Left lung (tissue), 14 donors: ENCODE measurements at regions of chr7 and their contacts with region 1.

Region 1: GRCh38 chr7:82729172-82730030 is 285.8 kb upstream of the CACNA2D1 start:
- DNase-seq: peak in 1 of 4 donors; percentile 52
- ATAC-seq: peak; percentile 58
- H3K4me3 ChIP-seq: no peak overlapping the region
- H3K27ac ChIP-seq: no peak overlapping the region
- H3K4me1 ChIP-seq: no peaks in the 10 kb centered on the region
- H3K27me3 ChIP-seq: no peaks in the 10 kb centered on the region
- CTCF ChIP-seq: peak; percentile 46

Region 2: DNA sequence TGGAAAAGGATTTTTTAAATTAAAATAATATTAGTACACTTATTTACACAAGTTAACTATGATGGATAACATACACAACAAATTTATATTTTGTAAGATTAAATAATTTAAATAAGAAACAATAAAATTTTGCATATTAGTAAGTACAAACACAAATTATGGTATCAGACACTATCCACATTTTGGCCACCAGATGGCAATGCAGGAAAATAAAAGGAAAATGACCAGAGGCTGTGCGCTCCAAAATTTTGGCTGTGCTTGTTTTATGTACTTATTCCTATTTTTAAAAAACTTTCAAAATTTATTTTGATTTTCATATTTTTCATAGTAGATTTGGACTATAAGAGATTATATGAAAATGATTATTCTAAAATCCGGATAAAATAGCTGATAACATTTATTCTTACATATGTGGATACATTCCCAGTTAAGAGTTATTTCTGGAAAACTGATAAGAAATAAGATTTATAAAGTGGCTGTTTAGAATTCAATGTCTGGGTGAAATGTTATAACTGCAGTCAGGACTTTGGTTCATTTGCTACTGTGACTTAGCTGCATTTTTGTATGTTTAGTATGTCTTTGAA is 684.8 kb before region 1 on chr7:
- intact Hi-C with region 1: loop called in 1 of 2 experiments (anchors 10 kb)
- DNase-seq: peak in 2 of 4 donors; percentile 39 to 71
- ATAC-seq: peak; percentile 68
- H3K4me3 ChIP-seq: no peak overlapping the region
- H3K27ac ChIP-seq: no peak overlapping the region
- H3K4me1 ChIP-seq: no peaks in the 10 kb centered on the region
- H3K27me3 ChIP-seq: no peaks in the 10 kb centered on the region
- CTCF ChIP-seq: peak; percentile 41 to 56